ENCODE measurements at regions of chr5 and their contacts with region 1.

Region 1: DNA sequence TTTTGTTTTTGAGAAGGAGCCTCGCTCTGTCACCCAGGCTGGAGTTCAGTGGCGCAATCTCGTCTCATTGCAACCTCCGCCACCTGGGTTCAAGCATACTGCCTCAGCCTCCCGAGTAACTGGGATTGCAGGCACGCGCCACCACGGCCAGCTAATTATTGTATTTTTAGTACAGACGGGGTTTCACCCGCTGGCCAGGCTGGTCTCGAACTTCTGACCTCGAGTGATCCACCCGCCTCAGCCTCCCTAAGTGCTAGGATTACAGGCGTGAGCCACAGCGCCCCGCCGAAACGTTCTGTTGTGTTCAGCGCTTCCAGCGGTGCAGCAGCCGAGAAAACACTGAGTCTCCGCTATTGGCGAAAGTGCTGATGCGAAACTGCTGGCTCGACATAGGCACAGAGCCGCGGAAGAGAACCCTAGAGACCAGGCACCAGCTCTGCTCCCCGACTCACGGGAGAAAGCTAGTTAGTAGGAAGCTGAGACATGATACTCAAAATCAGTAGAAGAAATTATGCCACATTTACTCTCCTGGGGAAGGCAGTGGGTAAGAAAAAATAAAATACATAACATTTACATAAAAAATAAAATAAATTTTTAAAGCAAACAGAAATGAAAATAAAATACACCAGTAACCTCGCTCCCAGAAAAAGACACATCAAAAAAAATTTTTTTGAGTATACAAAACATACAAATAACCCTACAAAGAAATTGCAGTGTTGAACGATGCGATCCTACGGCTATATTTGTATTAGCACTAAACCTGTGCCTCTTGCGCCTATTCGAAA is 31.6 kb downstream of the ANXA2R start:
- DNase-seq: peak; percentile 98 to 99 (median 99)
- H3K4me3 ChIP-seq: peak overlapping the region; percentile 32 to 95 (median 82)
- H3K27ac ChIP-seq: peak overlapping the region; percentile 89 to 91
- H3K4me1 ChIP-seq: peaks cover 12 to 44% (median 31%) of the 10 kb centered on the region in 4 experiments
- H3K27me3 ChIP-seq: no peaks in the 10 kb centered on the region

Region 2: GRCh38 chr5:42900734-42901133 is 107.8 kb before region 1 on chr5:
- CTCF ChIA-PET with region 1: no interaction called
- POLR2A ChIA-PET with region 1: no interaction called
- DNase-seq: no peak
- H3K4me3 ChIP-seq: no peak overlapping the region
- H3K27ac ChIP-seq: no peak overlapping the region
- H3K4me1 ChIP-seq: no peaks in the 10 kb centered on the region
- H3K27me3 ChIP-seq: peaks cover 0 to 4% (median 0%) of the 10 kb centered on the region in 5 experiments

Region 3: GRCh38 chr5:42994246-42995151 is 14.1 kb before region 1 on chr5:
- CTCF ChIA-PET with region 1: interaction called, 82 read pairs
- POLR2A ChIA-PET with region 1: interaction called, 62 read pairs
- DNase-seq: peak; percentile 90 to 96 (median 95)
- H3K4me3 ChIP-seq: peak overlapping the region; percentile 67 to 98 (median 91)
- H3K27ac ChIP-seq: peak overlapping the region; percentile 97 to 98
- H3K4me1 ChIP-seq: peaks cover 12 to 46% (median 35%) of the 10 kb centered on the region in 4 experiments
- H3K27me3 ChIP-seq: no peaks in the 10 kb centered on the region

Measured in common myeloid progenitor, CD34-positive (primary cell).